Activated CD8-positive, alpha-beta T cell treated with anti-CD3 and anti-CD28 coated beads for 36 hours (primary cell): ENCODE measurements at regions of chr6 and their contacts with region 1.

Region 1: DNA sequence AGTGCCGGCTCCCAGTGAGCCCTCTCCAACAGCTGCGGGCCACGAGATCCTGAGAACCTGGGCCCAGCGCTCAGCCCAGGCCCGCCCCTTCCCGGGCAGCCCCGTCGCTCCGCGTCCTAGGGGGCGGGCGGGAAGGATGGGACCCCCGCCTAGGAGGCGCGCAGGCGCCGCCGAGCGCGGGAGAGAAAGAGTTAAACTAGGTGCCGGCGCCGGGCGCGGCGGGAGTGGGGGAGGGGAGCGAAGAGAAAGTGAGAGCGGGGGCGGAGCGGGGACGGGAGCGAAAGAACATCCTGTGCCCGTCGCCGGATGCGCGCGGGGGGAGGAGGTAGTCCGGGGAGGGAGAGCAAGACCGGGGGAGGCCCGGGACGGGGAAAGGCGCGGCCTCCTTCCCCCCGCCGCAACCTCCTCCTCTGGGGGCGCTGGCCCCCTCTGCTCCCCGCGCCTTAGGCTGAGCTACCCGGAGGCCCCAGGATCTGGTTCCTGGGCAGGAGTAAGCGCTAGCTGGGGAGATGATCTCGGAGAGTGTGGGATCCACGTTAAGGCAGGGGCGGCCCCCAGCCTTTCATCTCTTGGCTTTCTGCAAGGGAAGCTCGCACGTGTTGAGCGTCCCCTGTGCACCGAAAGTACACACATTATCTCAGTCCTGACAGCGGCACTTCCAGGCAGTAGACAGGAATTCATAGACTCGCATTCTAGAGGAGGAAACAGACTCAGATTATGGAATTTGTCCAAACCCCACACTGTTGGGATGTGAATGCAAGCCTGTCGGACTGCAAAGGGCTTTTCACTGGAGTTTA is 4.9 kb upstream of the ARMC12 start:
- DNase-seq: peak; percentile 98
- ATAC-seq: peak; percentile 60
- H3K4me3 Mint-ChIP-seq: peak overlapping the region; percentile 81
- H3K27ac Mint-ChIP-seq: peak overlapping the region; percentile 94
- H3K4me1 Mint-ChIP-seq: peaks cover 74% of the 10 kb centered on the region
- H3K27me3 Mint-ChIP-seq: no peaks in the 10 kb centered on the region
- CTCF ChIP-seq: no peak

Region 2: DNA sequence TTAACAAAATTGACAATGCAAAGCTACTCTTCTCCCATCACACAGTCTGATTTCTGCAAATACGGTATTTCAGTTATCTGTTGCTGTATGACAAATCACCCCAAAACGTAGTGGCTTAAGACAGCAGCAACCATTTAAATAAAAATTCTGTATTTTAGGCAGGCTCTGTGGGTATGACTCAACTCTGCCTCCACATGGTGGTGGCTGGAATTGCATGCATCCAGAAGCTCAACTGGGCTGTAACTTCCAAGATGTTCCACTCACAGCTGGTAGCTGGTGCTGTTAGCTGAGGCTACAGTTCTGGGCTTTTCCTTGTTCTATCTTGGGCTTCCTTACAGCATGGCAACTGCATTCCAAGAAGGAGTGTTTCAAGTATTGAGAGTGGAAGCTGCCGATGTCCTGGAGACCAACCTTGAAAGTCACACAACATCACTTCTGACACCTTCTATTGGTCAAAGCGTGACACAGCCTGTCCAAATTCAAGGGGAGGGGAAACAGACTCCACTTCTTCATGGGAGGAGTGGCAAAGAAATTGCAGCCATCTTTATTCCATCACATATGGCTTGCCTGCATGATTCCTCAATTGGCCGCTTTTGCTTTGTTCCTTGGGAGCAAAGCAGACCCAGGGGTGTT is 179.5 kb before region 1 on chr6:
- CTCF ChIA-PET with region 1: interaction called, 38 read pairs
- POLR2A ChIA-PET with region 1: no interaction called
- intact Hi-C with region 1: no loop called
- DNase-seq: peak; percentile 82
- ATAC-seq: peak; percentile 88
- H3K4me3 Mint-ChIP-seq: no peak overlapping the region
- H3K27ac Mint-ChIP-seq: no peak overlapping the region
- H3K4me1 Mint-ChIP-seq: peaks cover 4% of the 10 kb centered on the region
- H3K27me3 Mint-ChIP-seq: no peaks in the 10 kb centered on the region
- CTCF ChIP-seq: peak; percentile 94

Region 3: DNA sequence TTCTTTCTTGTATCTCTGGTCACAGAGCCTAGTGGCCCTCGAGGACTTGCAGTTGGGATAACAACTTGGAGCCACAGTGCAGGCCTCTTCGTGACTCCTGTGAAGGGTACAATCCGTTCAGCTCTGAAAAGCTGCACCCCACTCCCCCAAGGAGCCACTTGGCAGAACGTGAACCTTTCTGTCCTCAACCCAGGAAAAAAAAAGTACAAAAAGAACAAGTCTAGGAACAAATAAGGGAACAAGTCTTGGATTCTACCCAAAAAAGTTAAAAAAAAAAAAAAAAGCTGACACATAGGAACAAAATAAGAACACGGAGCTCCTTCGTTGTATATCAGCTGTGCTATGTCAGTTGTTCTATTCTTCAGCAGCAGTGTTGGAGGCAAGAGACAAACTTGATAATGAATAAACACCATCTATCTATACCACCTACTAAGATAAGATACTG is 141.3 kb before region 1 on chr6:
- CTCF ChIA-PET with region 1: interaction called, 272 read pairs
- POLR2A ChIA-PET with region 1: interaction called, 11 read pairs
- intact Hi-C with region 1: no loop called
- DNase-seq: no peak
- ATAC-seq: no peak
- H3K4me3 Mint-ChIP-seq: no peak overlapping the region
- H3K27ac Mint-ChIP-seq: peak overlapping the region; percentile 49
- H3K4me1 Mint-ChIP-seq: peaks cover 79% of the 10 kb centered on the region
- H3K27me3 Mint-ChIP-seq: no peaks in the 10 kb centered on the region
- CTCF ChIP-seq: no peak

Region 4: DNA sequence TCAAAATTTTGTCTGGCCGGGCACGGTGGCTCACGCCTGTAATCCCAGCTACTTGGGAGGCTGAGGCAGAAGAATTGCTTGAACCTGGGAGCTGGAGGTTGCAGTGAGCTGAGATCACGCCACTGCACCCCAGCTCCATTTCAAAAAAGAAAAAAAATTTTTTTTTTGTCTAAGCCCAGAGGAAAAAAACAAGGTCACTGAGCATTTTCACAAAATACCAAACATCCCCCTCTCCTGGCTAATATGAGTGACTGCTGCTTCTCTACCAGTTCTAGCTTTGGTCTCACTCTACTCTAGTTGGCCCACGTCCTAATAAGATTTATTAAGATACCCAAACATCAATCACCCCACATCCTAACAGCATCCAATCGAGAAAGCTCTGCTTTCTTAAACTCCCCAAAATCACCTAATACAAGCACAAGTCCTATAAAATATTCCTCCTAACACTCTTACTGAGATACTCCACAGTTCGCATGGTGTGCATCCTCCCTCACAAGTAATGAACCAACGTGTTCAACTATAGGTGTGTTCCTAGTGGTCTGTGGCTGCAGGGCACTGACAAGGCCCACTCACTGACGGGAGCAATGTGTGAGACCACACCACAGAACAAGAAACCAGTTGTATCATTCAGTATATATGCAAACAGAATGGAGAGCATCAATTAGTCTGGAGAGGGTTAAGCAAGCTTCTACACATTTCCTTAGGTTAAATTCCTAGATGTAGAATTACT is 107.4 kb before region 1 on chr6:
- CTCF ChIA-PET with region 1: interaction called, 43 read pairs
- POLR2A ChIA-PET with region 1: interaction called, 6 read pairs
- intact Hi-C with region 1: no loop called
- DNase-seq: peak; percentile 35
- ATAC-seq: peak; percentile 73
- H3K4me3 Mint-ChIP-seq: no peak overlapping the region
- H3K27ac Mint-ChIP-seq: peak overlapping the region; percentile 57
- H3K4me1 Mint-ChIP-seq: peaks cover 38% of the 10 kb centered on the region
- H3K27me3 Mint-ChIP-seq: no peaks in the 10 kb centered on the region
- CTCF ChIP-seq: peak; percentile 49

Region 5: GRCh38 chr6:35650015-35650414 is 81.9 kb before region 1 on chr6:
- CTCF ChIA-PET with region 1: interaction called, 31 read pairs
- POLR2A ChIA-PET with region 1: no interaction called
- intact Hi-C with region 1: no loop called
- DNase-seq: no peak
- ATAC-seq: no peak
- H3K4me3 Mint-ChIP-seq: no peak overlapping the region
- H3K27ac Mint-ChIP-seq: no peak overlapping the region
- H3K4me1 Mint-ChIP-seq: peaks cover 38% of the 10 kb centered on the region
- H3K27me3 Mint-ChIP-seq: no peaks in the 10 kb centered on the region
- CTCF ChIP-seq: no peak

Region 6: DNA sequence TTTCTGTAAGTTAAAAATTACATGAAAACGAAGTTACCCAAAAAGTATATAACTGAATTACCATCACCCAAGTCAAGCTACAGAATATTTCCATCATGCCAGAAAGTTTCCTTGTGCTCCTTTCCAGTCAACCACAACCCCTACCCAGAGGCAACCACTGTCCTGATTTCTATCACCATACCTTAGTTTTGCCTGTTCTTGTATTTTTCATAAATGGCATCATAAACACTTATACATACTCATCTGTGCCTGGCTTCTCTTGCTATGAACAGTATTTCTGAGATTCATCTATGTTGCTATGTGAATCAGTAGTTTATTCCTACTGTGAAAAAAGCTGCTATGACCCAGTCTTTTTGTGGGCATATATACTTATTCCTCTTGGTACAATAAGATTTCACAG is 50.6 kb before region 1 on chr6:
- CTCF ChIA-PET with region 1: interaction called, 25 read pairs
- POLR2A ChIA-PET with region 1: interaction called, 30 read pairs
- intact Hi-C with region 1: no loop called
- DNase-seq: no peak
- ATAC-seq: peak; percentile 75
- H3K4me3 Mint-ChIP-seq: no peak overlapping the region
- H3K27ac Mint-ChIP-seq: peak overlapping the region; percentile 23
- H3K4me1 Mint-ChIP-seq: peaks cover 56% of the 10 kb centered on the region
- H3K27me3 Mint-ChIP-seq: no peaks in the 10 kb centered on the region
- CTCF ChIP-seq: no peak

Region 7: GRCh38 chr6:35719830-35720733 is 11.9 kb before region 1 on chr6:
- CTCF ChIA-PET with region 1: interaction called, 13 read pairs
- POLR2A ChIA-PET with region 1: interaction called, 95 read pairs
- intact Hi-C with region 1: no loop called
- DNase-seq: peak; percentile 65
- ATAC-seq: peak; percentile 53
- H3K4me3 Mint-ChIP-seq: peak overlapping the region; percentile 72
- H3K27ac Mint-ChIP-seq: peak overlapping the region; percentile 88
- H3K4me1 Mint-ChIP-seq: peaks cover 61% of the 10 kb centered on the region
- H3K27me3 Mint-ChIP-seq: no peaks in the 10 kb centered on the region
- CTCF ChIP-seq: no peak

Region 8: GRCh38 chr6:35833536-35833935 is 101.6 kb after region 1 on chr6:
- CTCF ChIA-PET with region 1: no interaction called
- POLR2A ChIA-PET with region 1: no interaction called
- intact Hi-C with region 1: no loop called
- DNase-seq: no peak
- ATAC-seq: no peak
- H3K4me3 Mint-ChIP-seq: no peak overlapping the region
- H3K27ac Mint-ChIP-seq: no peak overlapping the region
- H3K4me1 Mint-ChIP-seq: no peaks in the 10 kb centered on the region
- H3K27me3 Mint-ChIP-seq: no peaks in the 10 kb centered on the region
- CTCF ChIP-seq: no peak